Gastrocnemius medialis (tissue), 4 donors: ENCODE measurements at regions of chr3 and their contacts with region 1.

Region 1: GRCh38 chr3:45055411-45056143 is 29.5 kb downstream of the CLEC3B start:
- DNase-seq: no peak
- ATAC-seq: peak in 1 of 2 donors; percentile 49
- H3K4me3 ChIP-seq: no peak overlapping the region
- H3K27ac ChIP-seq: peak overlapping the region in 3 of 4 donors; percentile 31 to 86 (median 74)
- H3K4me1 ChIP-seq: peaks cover 28 to 37% of the 10 kb centered on the region in 2 donors
- H3K27me3 ChIP-seq: no peaks in the 10 kb centered on the region
- CTCF ChIP-seq: peak in 2 of 5 experiments; percentile 25 to 39
- POLR2A ChIP-seq: no peak

Region 2: DNA sequence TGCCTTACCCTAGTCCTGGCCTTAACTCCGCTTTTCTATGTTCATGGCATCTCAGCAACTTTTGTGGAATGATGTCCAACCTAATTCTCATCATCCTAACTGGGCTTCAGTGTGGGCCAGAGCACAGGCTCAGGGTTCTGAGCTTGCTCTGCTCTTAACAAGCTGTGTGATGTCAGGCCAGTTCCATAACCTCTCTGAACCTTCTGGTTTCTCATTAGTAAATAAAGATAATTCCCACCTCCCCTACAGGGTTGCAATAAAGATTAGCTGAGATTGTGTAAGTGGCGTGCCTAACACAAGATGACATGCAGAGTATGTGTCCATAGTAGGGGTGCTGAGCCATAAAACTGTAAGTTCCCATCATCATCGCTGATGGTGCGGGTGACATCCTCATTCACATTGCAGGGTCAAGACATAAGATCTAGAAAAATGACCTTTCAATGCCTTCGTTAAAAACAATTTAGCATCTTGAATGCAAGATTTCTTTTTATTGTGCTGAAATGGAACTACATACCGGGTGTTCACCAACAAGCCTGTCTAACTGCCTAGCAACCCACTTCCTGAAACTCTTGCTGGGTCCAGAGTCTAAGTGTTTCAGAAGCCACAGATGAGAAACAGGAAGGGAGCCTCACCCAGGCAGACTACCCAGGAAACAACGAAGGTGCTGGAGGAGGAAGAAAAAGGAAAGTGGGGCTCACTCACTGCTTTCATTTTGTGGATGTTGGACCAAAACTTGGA is 54.4 kb after region 1 on chr3:
- in situ Hi-C with region 1: no loop called
- intact Hi-C with region 1: loop called (anchors 5 kb)
- DNase-seq: no peak
- ATAC-seq: no peak
- H3K4me3 ChIP-seq: no peak overlapping the region
- H3K27ac ChIP-seq: no peak overlapping the region
- H3K4me1 ChIP-seq: peaks cover 21 to 26% of the 10 kb centered on the region in 2 donors
- H3K27me3 ChIP-seq: no peaks in the 10 kb centered on the region
- CTCF ChIP-seq: no peak
- POLR2A ChIP-seq: no peak

Region 3: DNA sequence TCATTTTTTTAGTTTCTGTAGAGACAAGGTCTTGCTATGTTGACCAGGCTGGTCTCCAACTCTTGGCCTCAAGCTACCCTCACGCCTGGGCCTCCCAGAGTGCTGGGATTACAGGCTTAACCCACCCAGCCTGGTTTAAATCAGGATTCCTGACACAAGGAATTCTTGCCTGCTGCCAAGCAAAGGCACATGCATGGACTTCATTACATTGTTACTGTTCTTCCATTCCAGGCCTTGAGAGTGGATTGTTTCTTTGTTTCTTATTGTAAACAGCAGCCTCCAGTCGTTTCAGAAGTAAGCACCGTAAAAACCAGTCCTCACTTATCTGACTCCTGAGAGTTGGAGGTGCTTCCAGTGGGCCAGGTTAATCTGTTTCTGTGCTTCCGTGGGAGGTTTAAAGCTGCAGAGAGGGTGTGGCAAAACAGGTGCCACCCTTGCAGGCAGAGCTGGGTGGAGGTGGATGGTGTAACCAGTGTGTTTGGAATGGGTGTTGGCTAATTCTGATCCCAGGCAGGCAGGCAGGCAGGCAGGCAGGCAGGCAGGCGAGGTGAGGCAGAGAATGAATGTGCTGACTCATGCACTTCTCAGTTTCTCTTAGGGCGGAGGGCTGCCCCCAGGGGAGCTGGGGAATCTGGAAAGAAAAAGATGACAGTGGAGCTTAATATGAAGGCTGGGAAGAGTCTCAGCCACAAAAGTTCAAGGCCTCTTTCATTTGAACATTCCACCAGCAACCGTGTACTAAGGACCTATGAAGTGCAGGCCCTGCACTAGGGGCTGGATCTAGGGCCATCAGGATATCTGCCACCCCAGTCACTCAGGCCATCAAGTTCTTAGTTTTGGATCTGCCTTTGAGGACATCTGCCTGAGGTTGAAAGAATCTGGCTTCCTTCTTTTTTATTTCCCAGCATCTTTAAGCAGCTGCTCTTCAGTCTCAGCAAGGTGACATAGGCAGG is 127.6 kb after region 1 on chr3:
- in situ Hi-C with region 1: no loop called
- intact Hi-C with region 1: no loop called
- DNase-seq: peak; percentile 57 to 84
- ATAC-seq: peak; percentile 55 to 74
- H3K4me3 ChIP-seq: no peak overlapping the region
- H3K27ac ChIP-seq: peak overlapping the region; percentile 67 to 81 (median 72)
- H3K4me1 ChIP-seq: peaks cover 32 to 33% of the 10 kb centered on the region in 2 donors
- H3K27me3 ChIP-seq: no peaks in the 10 kb centered on the region
- CTCF ChIP-seq: no peak
- POLR2A ChIP-seq: no peak